ENCODE measurements at regions of chr19 and their contacts with region 1.

Region 1: GRCh38 chr19:13861732-13862531 is 15.0 kb upstream of the NANOS3 start:
- DNase-seq: peak; percentile 93
- H3K4me3 Mint-ChIP-seq: peak overlapping the region; percentile 96
- H3K27ac Mint-ChIP-seq: peak overlapping the region; percentile 99
- H3K4me1 Mint-ChIP-seq: peaks cover 29% of the 10 kb centered on the region
- H3K27me3 Mint-ChIP-seq: peaks cover 28% of the 10 kb centered on the region

Region 2: GRCh38 chr19:13511947-13512346 is 350.0 kb before region 1 on chr19:
- CTCF ChIA-PET with region 1: no interaction called
- intact Hi-C with region 1: no loop called
- DNase-seq: no peak
- H3K4me3 Mint-ChIP-seq: no peak overlapping the region
- H3K27ac Mint-ChIP-seq: no peak overlapping the region
- H3K4me1 Mint-ChIP-seq: peaks cover 2% of the 10 kb centered on the region
- H3K27me3 Mint-ChIP-seq: peaks cover 48% of the 10 kb centered on the region

Region 3: DNA sequence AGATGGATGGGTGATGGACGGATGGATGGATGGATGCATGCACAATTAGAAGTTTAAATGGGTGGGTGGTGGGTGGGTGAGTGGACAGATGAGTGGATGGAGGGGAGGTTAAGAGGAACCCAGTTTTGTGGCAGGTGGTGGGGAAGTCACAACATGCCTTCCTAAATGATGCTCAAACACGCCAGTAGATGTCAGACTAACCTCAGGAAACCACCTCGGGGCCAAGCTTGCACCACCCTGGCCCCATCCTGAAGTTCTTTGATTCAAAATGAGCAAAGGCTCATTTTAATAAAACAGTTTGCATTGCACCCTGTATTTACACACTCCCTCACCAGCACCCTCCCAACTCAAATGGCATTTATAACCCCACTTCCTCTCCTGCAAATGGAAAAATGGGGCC is 264.3 kb before region 1 on chr19:
- CTCF ChIA-PET with region 1: interaction called, 3 read pairs
- intact Hi-C with region 1: loop called (anchors 1 kb)
- DNase-seq: peak; percentile 69
- H3K4me3 Mint-ChIP-seq: no peak overlapping the region
- H3K27ac Mint-ChIP-seq: no peak overlapping the region
- H3K4me1 Mint-ChIP-seq: no peaks in the 10 kb centered on the region
- H3K27me3 Mint-ChIP-seq: peaks cover 15% of the 10 kb centered on the region

Region 4: GRCh38 chr19:13731147-13731964 is 130.6 kb before region 1 on chr19:
- CTCF ChIA-PET with region 1: interaction called, 3 read pairs
- intact Hi-C with region 1: loop called (anchors 5 kb)
- DNase-seq: peak; percentile 95
- H3K4me3 Mint-ChIP-seq: peak overlapping the region; percentile 84
- H3K27ac Mint-ChIP-seq: peak overlapping the region; percentile 94
- H3K4me1 Mint-ChIP-seq: peaks cover 23% of the 10 kb centered on the region
- H3K27me3 Mint-ChIP-seq: no peaks in the 10 kb centered on the region

Region 5: GRCh38 chr19:13784731-13785452 is 77.0 kb before region 1 on chr19:
- CTCF ChIA-PET with region 1: interaction called, 124 read pairs
- intact Hi-C with region 1: loop called (anchors 1 kb)
- DNase-seq: peak; percentile 87
- H3K4me3 Mint-ChIP-seq: peak overlapping the region; percentile 54
- H3K27ac Mint-ChIP-seq: peak overlapping the region; percentile 59
- H3K4me1 Mint-ChIP-seq: peaks cover 55% of the 10 kb centered on the region
- H3K27me3 Mint-ChIP-seq: no peaks in the 10 kb centered on the region

Region 6: GRCh38 chr19:13833330-13834243 is 28.3 kb before region 1 on chr19:
- CTCF ChIA-PET with region 1: interaction called, 19 read pairs
- intact Hi-C with region 1: no loop called
- DNase-seq: peak; percentile 98
- H3K4me3 Mint-ChIP-seq: peak overlapping the region; percentile 84
- H3K27ac Mint-ChIP-seq: peak overlapping the region; percentile 99
- H3K4me1 Mint-ChIP-seq: peaks cover 35% of the 10 kb centered on the region
- H3K27me3 Mint-ChIP-seq: no peaks in the 10 kb centered on the region